ENCODE measurements at regions of chr4 and their contacts with region 1.

Region 1: GRCh38 chr4:169485791-169486742 is 126.3 kb downstream of the NEK1 start:
- DNase-seq: no peak
- H3K4me3 ChIP-seq: no peak overlapping the region
- H3K27ac ChIP-seq: no peak overlapping the region
- H3K4me1 ChIP-seq: no peaks in the 10 kb centered on the region
- H3K27me3 ChIP-seq: no peaks in the 10 kb centered on the region
- CTCF ChIP-seq: peak; percentile 66

Region 2: DNA sequence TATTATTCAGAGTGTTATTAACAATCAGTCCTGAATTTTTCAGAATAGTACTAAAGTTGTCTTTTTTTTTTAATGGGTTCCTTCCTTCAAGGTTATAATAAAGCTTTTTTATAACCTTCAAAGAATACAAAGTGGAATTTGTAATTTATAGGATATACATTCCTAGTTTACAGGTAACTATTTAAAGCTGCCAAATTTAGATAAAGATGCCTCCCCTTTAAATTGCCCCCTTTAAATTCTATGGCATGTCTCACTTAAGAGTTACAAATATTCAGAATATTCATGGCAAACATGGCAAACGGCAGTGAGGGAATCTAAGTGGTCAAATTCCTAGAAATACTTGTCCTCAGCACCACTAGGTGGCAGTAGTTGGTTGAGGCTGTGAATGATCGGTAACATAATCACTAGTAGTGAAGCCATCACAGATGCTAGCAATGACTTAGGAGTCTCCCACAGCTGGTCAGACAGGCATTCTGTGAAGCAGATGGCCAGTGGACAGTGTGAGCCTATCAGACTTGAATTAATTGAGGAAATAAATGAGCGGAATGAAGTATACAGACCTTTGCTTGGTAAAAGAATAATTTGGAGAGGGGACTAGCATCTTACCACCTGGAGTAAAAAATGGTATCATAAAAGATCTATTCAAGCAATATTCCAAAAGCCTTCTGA is 562.4 kb before region 1 on chr4:
- intact Hi-C with region 1: loop called (anchors 5 kb)
- DNase-seq: no peak
- H3K4me3 ChIP-seq: no peak overlapping the region
- H3K27ac ChIP-seq: no peak overlapping the region
- H3K4me1 ChIP-seq: peaks cover 14% of the 10 kb centered on the region
- H3K27me3 ChIP-seq: no peaks in the 10 kb centered on the region
- CTCF ChIP-seq: peak; percentile 82

Region 3: GRCh38 chr4:169024762-169025161 is 461.3 kb before region 1 on chr4:
- intact Hi-C with region 1: loop called (anchors 10 kb)
- DNase-seq: no peak
- H3K4me3 ChIP-seq: no peak overlapping the region
- H3K27ac ChIP-seq: peak overlapping the region; percentile 18
- H3K4me1 ChIP-seq: peaks cover 6% of the 10 kb centered on the region
- H3K27me3 ChIP-seq: no peaks in the 10 kb centered on the region
- CTCF ChIP-seq: peak; percentile 76

Region 4: DNA sequence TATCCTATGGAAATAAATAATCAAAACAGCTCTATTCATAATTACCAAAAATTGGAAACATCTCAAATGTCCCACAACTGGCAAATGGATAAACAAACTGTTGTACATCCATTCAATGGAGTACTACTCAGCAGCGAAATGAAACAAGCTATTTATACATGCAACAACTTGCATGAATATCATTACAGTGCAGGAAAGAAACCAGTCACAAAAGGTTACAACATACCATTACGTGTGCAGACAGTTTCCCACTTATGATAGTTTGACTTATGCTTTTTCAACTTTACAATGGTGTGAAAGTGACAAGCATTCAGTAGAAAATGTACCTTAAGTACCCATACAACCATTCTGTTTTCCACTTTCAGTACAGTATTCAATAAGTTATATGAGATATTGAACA is 44.0 kb after region 1 on chr4:
- intact Hi-C with region 1: no loop called
- DNase-seq: no peak
- H3K4me3 ChIP-seq: no peak overlapping the region
- H3K27ac ChIP-seq: no peak overlapping the region
- H3K4me1 ChIP-seq: no peaks in the 10 kb centered on the region
- H3K27me3 ChIP-seq: no peaks in the 10 kb centered on the region
- CTCF ChIP-seq: no peak